Lower leg skin (tissue), 4 donors: ENCODE measurements at regions of chr9 and their contacts with region 1.

Region 1: DNA sequence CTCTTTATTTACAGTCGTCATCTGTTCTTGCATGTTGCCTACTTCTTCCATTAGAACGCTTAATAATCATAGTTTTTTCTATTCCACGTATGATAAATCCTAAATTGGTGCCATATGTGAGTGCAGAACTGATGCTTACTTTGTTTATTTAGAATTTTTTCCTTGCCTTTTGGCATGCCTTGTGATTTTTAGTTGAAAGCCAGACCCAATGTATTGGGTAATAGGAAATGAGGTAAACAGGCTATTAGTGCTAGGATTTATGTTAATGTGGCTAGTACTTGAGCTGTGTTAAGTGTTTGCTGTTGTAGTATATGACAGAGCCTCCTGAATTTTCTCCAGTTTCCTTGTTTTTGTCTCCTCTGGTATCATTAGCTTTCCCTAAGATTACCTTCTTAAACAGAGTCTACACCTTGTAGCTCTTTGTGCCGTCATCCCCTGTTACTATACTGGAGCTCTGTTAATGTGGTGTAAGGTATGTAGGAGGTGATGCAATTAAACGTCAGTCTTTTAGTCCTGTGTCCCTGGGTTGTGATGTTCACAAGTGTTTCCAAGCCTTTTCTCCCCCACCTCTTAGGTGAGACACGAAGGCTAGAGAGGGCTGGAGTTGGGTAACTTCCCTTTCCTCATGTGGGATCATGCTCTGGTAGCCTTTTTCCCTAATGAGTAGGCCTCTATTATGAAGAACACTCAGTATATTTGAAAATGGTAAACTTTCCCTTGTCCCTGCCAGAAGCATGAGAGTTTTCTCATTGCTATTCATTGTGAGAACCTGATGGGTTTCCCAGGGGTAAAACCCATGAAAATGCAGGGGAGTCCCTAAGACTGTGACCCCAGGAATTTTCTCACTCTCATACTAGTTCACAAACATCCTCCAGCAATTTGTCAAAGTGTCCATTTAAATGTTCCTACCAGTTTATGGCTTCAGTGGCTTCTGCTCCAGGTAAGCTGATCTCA is 21.2 kb downstream of the SPATA31D3 start:
- DNase-seq: no peak
- H3K4me3 ChIP-seq: no peak overlapping the region
- CTCF ChIP-seq: no peak
- POLR2A ChIP-seq: no peak

Region 2: GRCh38 chr9:81999806-82000205 is 35.3 kb after region 1 on chr9:
- intact Hi-C with region 1: loop called (anchors 1 kb)
- DNase-seq: no peak
- H3K4me3 ChIP-seq: no peak overlapping the region
- CTCF ChIP-seq: no peak
- POLR2A ChIP-seq: no peak